CD4-positive, alpha-beta memory T cell (primary cell): ENCODE measurements at regions of chr5 and their contacts with region 1.

Region 1: GRCh38 chr5:112848116-112848811 is 12.8 kb upstream of the SRP19 start:
- DNase-seq: peak in 4 of 5 donors; percentile 37 to 43 (median 40)
- H3K4me3 ChIP-seq: no peak overlapping the region
- H3K4me3 Mint-ChIP-seq: peak overlapping the region in 2 of 8 donors; percentile 15 to 55
- H3K27ac ChIP-seq: no peak overlapping the region
- H3K27ac Mint-ChIP-seq: peak overlapping the region in 1 of 7 donors; percentile 10
- H3K4me1 ChIP-seq: peaks cover 3% of the 10 kb centered on the region
- H3K4me1 Mint-ChIP-seq: peaks cover 4 to 5% (median 4%) of the 10 kb centered on the region in 4 donors
- H3K27me3 ChIP-seq: no peaks in the 10 kb centered on the region
- H3K27me3 Mint-ChIP-seq: peaks cover 2 to 3% of the 10 kb centered on the region in 2 donors

Region 2: DNA sequence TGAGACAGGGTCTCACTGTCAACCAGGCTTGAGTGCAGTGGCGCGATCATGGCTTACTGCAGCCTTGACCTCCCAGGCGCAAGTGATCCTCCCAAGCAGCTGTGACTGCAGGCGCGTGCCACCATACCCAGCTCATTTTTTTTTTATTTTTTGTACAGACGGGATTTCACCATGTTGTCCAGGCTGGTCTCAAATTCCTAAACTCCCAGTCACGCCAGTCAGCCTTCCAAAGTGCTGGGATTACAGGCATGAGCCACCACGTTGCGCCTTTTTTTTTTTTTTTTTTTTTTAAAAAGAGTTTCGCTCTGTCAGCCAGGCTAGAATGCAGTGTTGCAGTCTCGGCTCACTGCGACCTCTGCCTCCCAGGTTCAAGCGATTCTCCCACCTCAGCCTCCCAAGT is 14.3 kb before region 1 on chr5:
- CTCF ChIA-PET with region 1: interaction called, 19 read pairs
- POLR2A ChIA-PET with region 1: no interaction called
- intact Hi-C with region 1: no loop called
- DNase-seq: no peak
- H3K4me3 ChIP-seq: no peak overlapping the region
- H3K4me3 Mint-ChIP-seq: no peak overlapping the region
- H3K27ac ChIP-seq: no peak overlapping the region
- H3K27ac Mint-ChIP-seq: no peak overlapping the region
- H3K4me1 ChIP-seq: no peaks in the 10 kb centered on the region
- H3K4me1 Mint-ChIP-seq: peaks cover 0 to 1% (median 0%) of the 10 kb centered on the region in 4 donors
- H3K27me3 ChIP-seq: no peaks in the 10 kb centered on the region
- H3K27me3 Mint-ChIP-seq: no peaks in the 10 kb centered on the region

Region 3: DNA sequence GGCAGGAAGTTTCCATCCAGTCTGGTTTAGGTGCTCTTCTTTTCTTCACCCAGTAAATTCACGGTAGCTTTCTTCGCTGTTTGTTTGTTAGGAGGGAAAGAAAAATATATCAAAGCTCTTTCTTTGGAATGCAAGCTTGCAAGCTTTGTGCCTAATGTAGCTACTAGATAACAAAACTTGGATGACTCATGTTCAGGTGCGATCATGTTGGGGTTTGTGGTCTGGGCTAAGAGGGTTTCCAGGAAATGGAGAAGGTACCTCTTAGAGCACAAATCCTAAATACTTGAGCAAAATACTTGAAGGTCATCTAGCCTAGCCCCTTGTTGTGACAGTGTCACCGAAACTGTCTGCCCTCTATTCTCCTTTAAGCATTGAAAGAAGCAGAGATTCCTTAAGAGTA is 30.5 kb after region 1 on chr5:
- CTCF ChIA-PET with region 1: interaction called, 10 read pairs
- POLR2A ChIA-PET with region 1: no interaction called
- intact Hi-C with region 1: no loop called
- DNase-seq: peak; percentile 32 to 87 (median 49)
- H3K4me3 ChIP-seq: peak overlapping the region in 1 of 2 donors; percentile 13
- H3K4me3 Mint-ChIP-seq: peak overlapping the region; percentile 3 to 73 (median 48)
- H3K27ac ChIP-seq: peak overlapping the region; percentile 31
- H3K27ac Mint-ChIP-seq: peak overlapping the region; percentile 32 to 88 (median 80)
- H3K4me1 ChIP-seq: peaks cover 47% of the 10 kb centered on the region
- H3K4me1 Mint-ChIP-seq: peaks cover 30 to 50% (median 38%) of the 10 kb centered on the region in 4 donors
- H3K27me3 ChIP-seq: no peaks in the 10 kb centered on the region
- H3K27me3 Mint-ChIP-seq: no peaks in the 10 kb centered on the region

Region 4: DNA sequence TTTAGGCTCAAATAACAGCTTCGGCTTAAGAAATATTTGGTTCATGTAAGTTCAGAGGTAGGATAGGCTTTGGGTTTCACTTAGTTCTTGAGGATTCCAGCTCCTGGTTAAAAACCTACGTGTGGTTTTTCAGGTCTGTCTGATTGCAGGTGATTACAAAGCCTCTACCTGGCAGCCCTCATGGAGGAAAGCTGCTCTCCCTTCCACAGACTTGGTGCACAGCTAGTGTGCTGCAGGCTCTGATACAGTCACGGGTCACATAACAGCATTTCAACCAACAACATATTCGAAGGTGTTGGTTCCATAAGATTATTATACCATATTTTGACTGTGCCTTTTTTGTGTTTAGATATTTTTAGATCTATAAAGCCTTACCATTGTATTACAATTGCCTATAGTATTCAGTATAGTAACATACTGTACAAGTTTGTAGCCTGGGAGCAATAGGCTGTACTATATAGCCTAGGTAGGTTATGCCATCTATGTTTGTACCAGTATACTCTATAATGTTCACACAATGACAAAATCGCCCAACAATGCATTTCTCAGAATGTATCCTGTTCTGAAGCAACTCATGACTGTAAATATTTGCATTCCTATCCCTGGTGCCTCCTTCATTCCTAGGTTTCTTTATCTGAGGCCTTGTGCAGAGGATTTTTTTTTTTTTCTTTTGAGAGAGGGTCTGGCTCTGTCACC is 120.3 kb after region 1 on chr5:
- CTCF ChIA-PET with region 1: interaction called, 14 read pairs
- POLR2A ChIA-PET with region 1: no interaction called
- intact Hi-C with region 1: loop called (anchors 1 kb)
- DNase-seq: no peak
- H3K4me3 ChIP-seq: no peak overlapping the region
- H3K4me3 Mint-ChIP-seq: no peak overlapping the region
- H3K27ac ChIP-seq: no peak overlapping the region
- H3K27ac Mint-ChIP-seq: no peak overlapping the region
- H3K4me1 ChIP-seq: peaks cover 8% of the 10 kb centered on the region
- H3K4me1 Mint-ChIP-seq: peaks cover 7 to 12% (median 8%) of the 10 kb centered on the region in 4 donors
- H3K27me3 ChIP-seq: no peaks in the 10 kb centered on the region
- H3K27me3 Mint-ChIP-seq: no peaks in the 10 kb centered on the region